ENCODE measurements at regions of chr9 and their contacts with region 1.

Region 1: GRCh38 chr9:104177003-104177611 is 83.0 kb downstream of the SMC2 start:
- DNase-seq: no peak
- H3K4me3 ChIP-seq: no peak overlapping the region
- H3K27ac ChIP-seq: no peak overlapping the region
- H3K4me1 ChIP-seq: no peaks in the 10 kb centered on the region
- H3K27me3 ChIP-seq: no peaks in the 10 kb centered on the region
- CTCF ChIP-seq: peak; percentile 12 to 68 (median 44)
- POLR2A ChIP-seq: no peak

Region 2: GRCh38 chr9:104258289-104259045 is 81.4 kb after region 1 on chr9:
- intact Hi-C with region 1: no loop called
- DNase-seq: no peak
- H3K4me3 ChIP-seq: no peak overlapping the region
- H3K27ac ChIP-seq: no peak overlapping the region
- H3K4me1 ChIP-seq: no peaks in the 10 kb centered on the region
- H3K27me3 ChIP-seq: peaks cover 0 to 10% (median 0%) of the 10 kb centered on the region in 4 donors
- CTCF ChIP-seq: no peak
- POLR2A ChIP-seq: no peak

Region 3: GRCh38 chr9:104386425-104387069 is 209.4 kb after region 1 on chr9:
- intact Hi-C with region 1: loop called (anchors 10 kb)
- DNase-seq: no peak
- H3K4me3 ChIP-seq: no peak overlapping the region
- H3K27ac ChIP-seq: no peak overlapping the region
- H3K4me1 ChIP-seq: no peaks in the 10 kb centered on the region
- H3K27me3 ChIP-seq: peaks cover 0 to 9% (median 0%) of the 10 kb centered on the region in 4 donors
- CTCF ChIP-seq: peak in 5 of 6 experiments; percentile 32 to 71 (median 48)
- POLR2A ChIP-seq: no peak

Measured in esophagus squamous epithelium (tissue), 5 donors.